HCT116 (cell line): ENCODE measurements at regions of chr6 and their contacts with region 1.

Region 1: GRCh38 chr6:35342258-35343091 is at the start of gene PPARD:
- DNase-seq: peak; percentile 90
- ATAC-seq: peak; percentile 92
- H3K4me3 ChIP-seq: peak within 1 kb of the TSS; percentile 79 to 90
- H3K27ac ChIP-seq: peak within 1 kb of the TSS; percentile 55
- H3K4me1 ChIP-seq: peaks cover 16 to 27% of the 10 kb centered on the region in 2 experiments; a peak in 3 of 4 replicates
- H3K27me3 ChIP-seq: no peaks in the 10 kb centered on the region
- CTCF ChIP-seq: peak; percentile 97 to 98 (median 98)
- POLR2A ChIP-seq: peak; percentile 47
- RAD21 ChIP-seq: peak; percentile 100
- total RNA-seq, gene PPARD: 38.4 TPM

Region 2: DNA sequence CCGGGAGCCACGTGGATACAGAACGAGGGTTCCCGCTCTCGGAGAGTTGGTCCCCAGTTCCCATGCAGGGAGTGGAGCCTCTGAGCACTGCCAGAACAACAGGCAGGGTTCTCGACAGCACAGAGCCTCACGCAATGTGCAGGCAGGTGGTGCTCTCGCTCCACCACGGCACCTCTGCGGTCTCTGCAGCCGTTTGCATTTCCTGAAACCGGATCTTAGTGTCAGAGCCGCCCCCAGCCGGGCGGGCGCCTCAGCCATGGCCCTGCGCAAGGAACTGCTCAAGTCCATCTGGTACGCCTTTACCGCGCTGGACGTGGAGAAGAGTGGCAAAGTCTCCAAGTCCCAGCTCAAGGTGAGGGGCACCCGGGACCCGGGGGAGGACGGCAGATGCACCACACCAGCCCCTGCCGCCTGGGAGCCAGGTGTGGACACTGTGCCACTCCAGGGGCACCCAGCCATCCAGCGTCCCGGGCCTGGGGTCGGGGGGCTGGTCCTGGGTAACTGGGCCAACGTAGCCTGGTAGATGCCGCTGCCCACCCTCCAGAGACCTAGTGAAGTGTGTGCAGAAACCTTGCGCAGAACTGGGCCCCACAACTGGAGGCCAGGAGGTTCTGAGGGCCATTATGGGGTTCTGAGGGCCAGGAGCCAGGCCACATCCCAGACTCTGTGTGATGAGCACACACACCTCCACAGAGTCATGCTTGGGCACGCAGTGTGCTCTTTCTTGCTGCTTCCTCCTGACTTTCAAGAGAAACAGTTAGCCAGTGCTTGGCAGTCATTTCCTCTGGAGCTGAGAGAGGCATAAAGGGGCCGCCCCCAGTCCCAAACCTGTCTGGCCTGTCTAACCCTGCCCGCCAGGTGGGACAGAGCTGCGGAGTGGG is 44.6 kb before region 1 on chr6 and contains the start of gene DEF6:
- CTCF ChIA-PET with region 1: interaction called, 18 read pairs
- POLR2A ChIA-PET with region 1: no interaction called
- RAD21 ChIA-PET with region 1: interaction called, 5 to 7 read pairs
- intact Hi-C with region 1: loop called (anchors 2 kb)
- DNase-seq: peak; percentile 81
- ATAC-seq: peak; percentile 93
- H3K4me3 ChIP-seq: peak within 1 kb of the TSS; percentile 84 to 94
- H3K27ac ChIP-seq: peak within 1 kb of the TSS; percentile 70
- H3K4me1 ChIP-seq: peaks cover 14 to 39% of the 10 kb centered on the region in 2 experiments
- H3K27me3 ChIP-seq: no peaks in the 10 kb centered on the region
- CTCF ChIP-seq: peak; percentile 89 to 96 (median 89)
- POLR2A ChIP-seq: peak; percentile 53
- RAD21 ChIP-seq: peak; percentile 100
- total RNA-seq, gene DEF6: 40.4 TPM

Region 3: DNA sequence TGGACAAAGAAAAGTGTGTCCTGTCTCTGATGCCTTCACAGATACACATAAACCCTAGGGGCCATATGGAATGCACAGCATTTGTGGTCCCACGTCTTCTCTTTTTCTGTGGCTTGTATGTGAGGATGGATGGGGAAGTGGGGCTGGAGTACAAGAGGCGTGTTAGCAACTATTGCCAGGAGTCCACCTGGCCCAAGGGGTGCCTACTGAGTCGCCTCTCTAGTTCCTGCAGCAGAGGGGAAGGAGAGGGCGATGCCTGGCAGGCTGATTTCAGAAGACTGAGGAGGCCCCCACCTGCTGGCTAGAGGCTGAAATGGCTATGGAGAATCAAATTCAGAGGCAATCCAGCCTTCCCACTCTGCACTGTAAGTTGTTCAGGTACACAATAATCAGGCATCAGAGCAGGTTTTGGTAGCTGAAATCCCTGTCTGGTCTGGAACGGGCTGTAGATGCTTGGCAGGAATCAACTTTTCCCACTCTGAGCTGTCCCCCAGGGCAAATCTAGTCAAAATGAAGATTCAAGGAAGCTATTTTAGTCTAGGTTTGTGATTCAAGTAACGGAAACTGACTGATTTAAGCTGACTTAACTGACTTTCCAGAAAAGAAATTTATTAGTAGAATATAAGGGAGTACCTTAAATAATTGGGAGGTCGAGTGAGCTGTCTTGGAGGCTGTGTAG is 15.0 kb before region 1 on chr6:
- CTCF ChIA-PET with region 1: interaction called, 13 read pairs
- POLR2A ChIA-PET with region 1: interaction called, 3 read pairs
- RAD21 ChIA-PET with region 1: interaction called in 1 of 2 experiments, 4 read pairs
- intact Hi-C with region 1: no loop called
- DNase-seq: peak; percentile 32
- ATAC-seq: peak; percentile 87
- H3K4me3 ChIP-seq: no peak overlapping the region
- H3K27ac ChIP-seq: no peak overlapping the region
- H3K4me1 ChIP-seq: peaks cover 4 to 20% of the 10 kb centered on the region in 2 experiments; a peak in 3 of 4 replicates
- H3K27me3 ChIP-seq: no peaks in the 10 kb centered on the region
- CTCF ChIP-seq: peak; percentile 50 to 67 (median 59)
- POLR2A ChIP-seq: no peak
- RAD21 ChIP-seq: peak; percentile 59

Region 4: GRCh38 chr6:35402136-35402855 is 59.8 kb after region 1 on chr6:
- CTCF ChIA-PET with region 1: interaction called, 10 read pairs
- POLR2A ChIA-PET with region 1: no interaction called
- RAD21 ChIA-PET with region 1: no interaction called
- intact Hi-C with region 1: loop called (anchors 5 kb)
- DNase-seq: no peak
- ATAC-seq: no peak
- H3K4me3 ChIP-seq: no peak overlapping the region
- H3K27ac ChIP-seq: no peak overlapping the region
- H3K4me1 ChIP-seq: peaks cover 30 to 67% of the 10 kb centered on the region in 2 experiments
- H3K27me3 ChIP-seq: no peaks in the 10 kb centered on the region
- CTCF ChIP-seq: no peak
- POLR2A ChIP-seq: no peak
- RAD21 ChIP-seq: no peak

Region 5: DNA sequence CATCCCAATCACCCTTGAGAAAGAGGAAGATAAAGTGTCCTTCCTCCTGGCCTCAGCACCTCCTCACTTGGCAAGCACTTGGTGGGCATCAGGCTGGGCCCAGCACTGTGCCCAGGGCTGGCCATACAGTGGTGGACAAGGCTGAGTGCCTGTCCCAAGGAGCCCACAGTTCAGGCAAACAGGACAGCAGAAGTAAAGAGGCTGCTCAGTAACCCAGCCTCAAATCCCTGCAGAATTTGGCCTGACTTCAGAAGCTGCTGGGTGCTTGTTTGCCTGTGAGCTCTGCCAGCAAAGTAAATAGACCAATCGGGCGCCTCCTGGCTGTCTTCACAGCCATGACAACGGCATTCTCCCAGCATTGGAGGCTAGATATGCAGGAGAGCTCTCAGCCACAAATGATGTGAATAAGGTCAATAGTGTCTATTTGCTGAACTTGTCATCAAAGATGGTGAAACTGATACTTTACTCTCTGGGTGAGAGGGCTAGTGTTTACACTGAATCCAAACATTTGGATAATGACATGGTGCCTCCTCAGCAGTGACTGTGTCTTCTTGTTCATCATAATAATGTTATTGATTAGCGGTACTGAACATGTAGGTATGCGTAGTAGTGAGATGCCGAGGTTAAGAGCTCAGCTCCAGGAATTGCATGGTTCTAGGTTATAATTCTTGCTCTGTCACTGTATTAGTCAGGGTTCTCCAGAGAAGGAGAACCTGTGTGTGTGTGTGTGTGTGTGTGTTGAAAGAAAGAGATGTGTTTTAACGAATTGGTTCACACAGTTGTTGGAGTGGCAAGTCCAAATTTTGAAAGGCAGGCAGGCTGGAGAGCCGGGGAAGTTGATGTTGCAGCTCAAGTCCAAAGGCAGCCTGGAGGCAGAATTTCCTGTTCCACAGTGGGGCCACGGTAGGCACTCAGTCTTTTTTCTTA is 72.9 kb after region 1 on chr6:
- CTCF ChIA-PET with region 1: interaction called, 30 read pairs
- POLR2A ChIA-PET with region 1: no interaction called
- RAD21 ChIA-PET with region 1: interaction called in 1 of 2 experiments, 5 read pairs
- intact Hi-C with region 1: loop called (anchors 1 kb)
- DNase-seq: no peak
- ATAC-seq: peak; percentile 81
- H3K4me3 ChIP-seq: no peak overlapping the region
- H3K27ac ChIP-seq: no peak overlapping the region
- H3K4me1 ChIP-seq: peaks cover 0 to 11% of the 10 kb centered on the region in 2 experiments; a peak in 3 of 4 replicates
- H3K27me3 ChIP-seq: no peaks in the 10 kb centered on the region
- CTCF ChIP-seq: peak; percentile 46 to 64 (median 57); a peak in 5 of 6 replicates
- POLR2A ChIP-seq: no peak
- RAD21 ChIP-seq: peak; percentile 66

Region 6: GRCh38 chr6:35452186-35453090 is 110.0 kb after region 1 on chr6 and contains the start of gene FANCE:
- CTCF ChIA-PET with region 1: interaction called, 120 read pairs
- POLR2A ChIA-PET with region 1: interaction called, 17 read pairs
- RAD21 ChIA-PET with region 1: interaction called, 22 to 30 read pairs
- intact Hi-C with region 1: loop called (anchors 1 kb)
- DNase-seq: peak; percentile 81
- ATAC-seq: peak; percentile 87
- H3K4me3 ChIP-seq: peak within 1 kb of the TSS; percentile 62 to 72
- H3K27ac ChIP-seq: peak within 1 kb of the TSS; percentile 46; the same call in 1 of the 2 replicates
- H3K4me1 ChIP-seq: peaks cover 13 to 28% of the 10 kb centered on the region in 2 experiments; a peak in 3 of 4 replicates
- H3K27me3 ChIP-seq: no peaks in the 10 kb centered on the region
- CTCF ChIP-seq: no peak
- POLR2A ChIP-seq: no peak
- RAD21 ChIP-seq: no peak
- total RNA-seq, gene FANCE: 16.1 TPM

Region 7: GRCh38 chr6:35468181-35468979 is 125.9 kb after region 1 on chr6 and contains the start of gene RPL10A:
- CTCF ChIA-PET with region 1: interaction called, 6 read pairs
- POLR2A ChIA-PET with region 1: interaction called, 8 read pairs
- RAD21 ChIA-PET with region 1: interaction called in 1 of 2 experiments, 5 read pairs
- intact Hi-C with region 1: loop called (anchors 1 kb)
- DNase-seq: peak; percentile 94
- ATAC-seq: peak; percentile 82
- H3K4me3 ChIP-seq: peak within 1 kb of the TSS; percentile 98 to 99
- H3K27ac ChIP-seq: peak within 1 kb of the TSS; percentile 82
- H3K4me1 ChIP-seq: peaks cover 13 to 32% of the 10 kb centered on the region in 2 experiments; a peak in 3 of 4 replicates
- H3K27me3 ChIP-seq: no peaks in the 10 kb centered on the region
- CTCF ChIP-seq: peak in 2 of 3 experiments; percentile 96; a peak in 4 of 6 replicates
- POLR2A ChIP-seq: peak; percentile 99
- RAD21 ChIP-seq: no peak
- total RNA-seq, gene RPL10A: 1,981 TPM